Left lung (tissue), 14 donors: ENCODE measurements at regions of chr6 and their contacts with region 1.

Region 1: DNA sequence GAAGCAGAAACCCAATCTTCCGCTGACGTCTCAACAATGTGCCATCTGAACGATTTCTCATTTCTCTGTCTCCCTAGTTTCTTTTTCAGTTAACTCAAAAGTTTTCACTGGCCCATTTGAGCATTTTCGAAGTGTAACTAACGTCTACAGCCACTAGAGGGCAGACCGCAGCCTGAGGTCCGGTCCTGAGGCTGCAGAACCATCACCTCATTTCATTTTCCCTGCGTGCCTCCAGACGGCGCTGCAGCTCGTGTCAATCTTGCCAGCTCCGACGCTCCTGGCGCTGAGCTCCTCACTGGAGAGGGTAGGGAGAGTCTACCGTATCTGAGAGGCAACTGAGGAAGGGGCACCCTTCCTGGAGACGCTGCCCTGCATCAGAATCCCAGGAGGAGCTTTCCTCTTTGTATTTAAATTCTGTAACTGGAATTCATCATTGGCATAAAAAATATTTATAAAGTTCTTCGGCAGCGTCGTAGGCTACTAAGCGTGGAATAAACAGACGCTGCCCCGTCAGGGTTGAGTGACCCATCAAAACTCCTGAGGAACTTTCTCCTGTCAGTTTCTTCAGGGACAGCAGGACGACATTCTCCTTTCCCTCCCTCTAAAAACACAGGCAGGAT is 28.5 kb upstream of the DTNBP1 start:
- DNase-seq: peak; percentile 84 to 94 (median 88)
- ATAC-seq: peak; percentile 100
- H3K4me3 ChIP-seq: peak overlapping the region; percentile 19 to 23
- H3K27ac ChIP-seq: no peak overlapping the region
- H3K4me1 ChIP-seq: peaks cover 0 to 18% of the 10 kb centered on the region in 2 donors
- H3K27me3 ChIP-seq: no peaks in the 10 kb centered on the region
- CTCF ChIP-seq: peak; percentile 94 to 96

Region 2: GRCh38 chr6:15001326-15001910 is 689.9 kb before region 1 on chr6:
- intact Hi-C with region 1: no loop called
- DNase-seq: no peak
- ATAC-seq: no peak
- H3K4me3 ChIP-seq: no peak overlapping the region
- H3K27ac ChIP-seq: no peak overlapping the region
- H3K4me1 ChIP-seq: no peaks in the 10 kb centered on the region
- H3K27me3 ChIP-seq: no peaks in the 10 kb centered on the region
- CTCF ChIP-seq: no peak

Region 3: DNA sequence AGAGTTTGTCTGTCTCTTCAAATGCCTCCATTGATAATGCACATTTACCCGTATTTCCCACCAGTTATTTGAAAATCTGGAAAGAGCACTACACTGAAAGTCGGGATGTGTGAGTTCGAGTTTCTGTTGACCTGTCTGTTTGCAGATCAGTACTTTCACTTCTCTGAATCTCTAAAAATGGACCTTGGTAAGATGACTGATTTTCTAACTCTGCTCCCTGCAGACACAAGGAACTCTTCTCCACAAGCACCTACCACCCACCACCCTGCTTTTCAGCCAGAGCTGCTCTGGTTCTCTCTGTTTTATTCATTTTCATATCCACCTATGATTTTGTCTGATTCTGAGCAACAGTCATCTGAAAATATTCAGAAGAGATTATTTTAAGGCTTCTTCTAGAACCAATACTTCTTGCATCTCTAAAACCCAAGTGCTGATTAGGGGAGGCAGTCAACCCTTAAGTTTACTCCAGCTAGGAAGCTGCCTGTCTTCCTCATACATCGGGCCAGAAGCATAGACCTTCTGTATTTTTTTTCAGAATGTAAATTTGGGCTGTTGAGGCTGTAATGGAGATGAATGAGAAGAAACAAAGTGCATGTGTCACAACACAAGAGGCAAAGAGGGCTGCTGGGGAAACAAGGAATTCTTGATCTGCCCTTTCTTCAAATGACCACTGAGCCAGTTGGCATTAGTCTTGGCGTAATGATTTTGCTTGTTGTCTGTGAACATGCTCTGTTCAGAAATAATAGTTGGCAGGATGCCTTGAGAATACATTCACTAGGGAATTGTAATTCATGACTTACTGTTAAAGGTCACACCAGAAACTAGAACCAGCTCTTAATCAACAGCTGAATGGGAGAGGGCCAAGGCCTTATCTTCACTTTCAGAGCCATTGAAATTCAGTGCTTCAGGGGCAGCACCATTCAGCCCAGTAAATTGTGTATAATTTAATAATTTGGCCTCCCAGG is 352.1 kb after region 1 on chr6:
- intact Hi-C with region 1: no loop called
- DNase-seq: no peak
- ATAC-seq: no peak
- H3K4me3 ChIP-seq: no peak overlapping the region
- H3K27ac ChIP-seq: no peak overlapping the region
- H3K4me1 ChIP-seq: no peaks in the 10 kb centered on the region
- H3K27me3 ChIP-seq: no peaks in the 10 kb centered on the region
- CTCF ChIP-seq: no peak

Region 4: DNA sequence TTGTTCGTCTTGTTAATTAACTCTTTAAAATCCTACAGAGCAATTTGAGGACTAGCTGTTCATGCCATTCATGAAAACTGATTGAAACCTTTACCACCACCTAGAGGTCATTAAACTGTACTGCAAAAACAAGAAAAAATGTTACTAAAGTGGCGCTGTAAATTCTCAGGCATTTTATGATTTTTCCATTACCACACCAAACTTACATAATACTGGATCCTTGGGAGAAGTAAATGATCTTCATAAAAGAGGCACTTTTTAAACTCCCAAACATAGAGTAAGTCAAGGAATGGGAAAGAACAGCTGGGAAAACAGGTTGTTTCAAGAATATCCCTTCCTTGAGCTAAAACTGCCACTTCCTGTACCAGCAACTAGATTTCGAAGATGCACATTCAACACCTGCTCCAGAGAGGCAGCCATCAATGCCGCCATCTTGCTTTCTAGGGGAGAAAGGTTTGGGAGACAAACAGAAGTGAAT is 491.9 kb after region 1 on chr6:
- intact Hi-C with region 1: loop called in 1 of 2 experiments (anchors 5 kb)
- DNase-seq: peak in 1 of 4 donors; percentile 51
- ATAC-seq: peak; percentile 74
- H3K4me3 ChIP-seq: no peak overlapping the region
- H3K27ac ChIP-seq: no peak overlapping the region
- H3K4me1 ChIP-seq: peaks cover 0 to 17% of the 10 kb centered on the region in 2 donors
- H3K27me3 ChIP-seq: no peaks in the 10 kb centered on the region
- CTCF ChIP-seq: peak; percentile 68 to 79